Calu3 (cell line): ENCODE measurements at regions of chr2 and their contacts with region 1.

Region 1: DNA sequence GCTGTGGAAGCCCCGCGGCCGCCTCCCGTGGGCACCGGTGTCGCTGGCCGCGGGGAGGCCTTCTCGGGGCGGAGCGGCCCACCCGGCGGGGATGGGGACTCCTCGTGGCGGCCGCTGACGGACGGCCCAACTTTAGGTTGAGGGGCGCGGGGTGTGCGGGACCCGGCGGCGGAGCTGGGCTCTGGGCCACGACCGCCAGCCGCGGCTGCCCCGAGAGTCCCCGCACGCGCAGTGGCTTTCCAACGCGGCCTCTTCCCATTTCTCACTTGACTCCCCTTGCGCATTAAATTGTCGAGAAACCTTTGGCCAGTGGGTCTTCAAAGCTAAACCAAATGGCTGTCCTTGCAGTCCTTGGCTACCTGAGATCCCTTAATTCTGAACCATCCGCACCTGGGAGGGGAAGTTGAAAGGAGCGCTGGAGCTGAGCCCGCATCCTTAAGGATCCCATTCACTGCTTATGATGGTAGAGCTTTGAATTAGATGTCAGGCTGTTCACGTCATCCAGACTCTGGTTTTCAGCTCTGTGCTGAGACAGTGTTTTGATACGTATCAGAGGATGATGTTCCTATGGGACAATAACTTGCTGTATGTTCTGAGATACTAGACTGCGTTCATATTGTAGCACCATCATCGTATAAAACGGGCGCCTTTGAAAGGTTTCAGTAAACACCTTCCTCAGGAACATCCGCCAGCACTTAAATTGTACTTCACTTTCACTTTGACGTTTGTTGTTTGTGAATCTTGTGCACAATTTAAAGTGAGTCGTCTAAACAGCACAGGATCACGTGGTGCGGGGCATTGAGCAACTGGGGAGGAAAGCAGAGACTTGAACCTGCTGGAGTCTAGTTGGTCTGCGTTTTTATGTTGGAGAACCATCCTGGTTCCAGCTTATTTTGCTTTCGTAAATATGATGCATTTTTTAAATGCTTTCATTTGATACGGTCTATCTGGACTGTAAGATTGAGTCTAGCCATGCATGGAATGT is 874 bp downstream of the CLIP4 start:
- DNase-seq: peak; percentile 73
- H3K4me3 Mint-ChIP-seq: peak overlapping the region; percentile 79
- H3K27ac Mint-ChIP-seq: peak overlapping the region; percentile 97
- H3K4me1 Mint-ChIP-seq: peaks cover 65% of the 10 kb centered on the region
- H3K27me3 Mint-ChIP-seq: no peaks in the 10 kb centered on the region
- CTCF ChIP-seq: no peak

Region 2: DNA sequence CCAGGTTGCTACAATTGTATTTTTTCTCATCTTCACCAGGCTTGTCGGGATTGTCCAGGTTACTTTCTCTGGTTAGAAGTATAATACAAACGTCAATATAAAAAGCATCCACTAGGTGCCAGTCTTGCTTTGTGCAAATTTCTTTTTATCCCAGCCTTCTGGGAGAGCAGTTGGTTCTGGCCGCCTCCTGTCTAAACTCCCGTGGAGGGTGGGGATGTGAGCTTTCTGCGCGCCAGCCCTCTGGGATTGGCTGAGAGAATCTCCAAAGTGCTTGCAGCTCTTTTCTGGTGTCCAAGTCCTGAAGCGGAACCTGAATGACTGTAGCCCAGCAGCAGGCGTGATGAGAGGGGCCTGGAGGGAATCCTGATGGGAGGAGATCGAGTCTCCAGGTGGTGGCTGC is 157.4 kb before region 1 on chr2:
- CTCF ChIA-PET with region 1: no interaction called
- intact Hi-C with region 1: loop called (anchors 10 kb)
- DNase-seq: peak; percentile 65
- H3K4me3 Mint-ChIP-seq: no peak overlapping the region
- H3K27ac Mint-ChIP-seq: no peak overlapping the region
- H3K4me1 Mint-ChIP-seq: peaks cover 8% of the 10 kb centered on the region
- H3K27me3 Mint-ChIP-seq: no peaks in the 10 kb centered on the region
- CTCF ChIP-seq: peak; percentile 72

Region 3: DNA sequence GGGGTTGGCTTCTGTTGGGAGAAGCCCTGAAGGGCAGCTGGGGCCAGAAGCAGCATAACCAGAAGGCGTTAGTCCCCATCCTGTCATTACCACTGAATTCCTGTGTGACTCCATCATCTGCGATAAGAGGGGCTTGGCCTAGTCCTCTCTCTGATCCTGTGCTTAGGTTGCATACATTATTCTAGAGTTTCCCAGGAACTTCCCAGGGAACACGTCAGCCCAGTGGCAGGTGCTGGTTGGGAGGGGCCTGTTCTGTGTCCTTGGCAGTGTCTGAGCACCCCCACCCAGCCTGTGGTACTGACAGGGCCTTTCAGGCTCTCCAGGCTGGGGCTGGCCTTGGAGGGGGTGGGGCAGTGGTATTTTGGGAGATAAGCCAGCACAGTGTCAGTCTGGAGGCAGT is 139.5 kb before region 1 on chr2:
- CTCF ChIA-PET with region 1: no interaction called
- intact Hi-C with region 1: loop called (anchors 5 kb)
- DNase-seq: peak; percentile 90
- H3K4me3 Mint-ChIP-seq: peak overlapping the region; percentile 44
- H3K27ac Mint-ChIP-seq: peak overlapping the region; percentile 88
- H3K4me1 Mint-ChIP-seq: peaks cover 36% of the 10 kb centered on the region
- H3K27me3 Mint-ChIP-seq: no peaks in the 10 kb centered on the region
- CTCF ChIP-seq: no peak

Region 4: DNA sequence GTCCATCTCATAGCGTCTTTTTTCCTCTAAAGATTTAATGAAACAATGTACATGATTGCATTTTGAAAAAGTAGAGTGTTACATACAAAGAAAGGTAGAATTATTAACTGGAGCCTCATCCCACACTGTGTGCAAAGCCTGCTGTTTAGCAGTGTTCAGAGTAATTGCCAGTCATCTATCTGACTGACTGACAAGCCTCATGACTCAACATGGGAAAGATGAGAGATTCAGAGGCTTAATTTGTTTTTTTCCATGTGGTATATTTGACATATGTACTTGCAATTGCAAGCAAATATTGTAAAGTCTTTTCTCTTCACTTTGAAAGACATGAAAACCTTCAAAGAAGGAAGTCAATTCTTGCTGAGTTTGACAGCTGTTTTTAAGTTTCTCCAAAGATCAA is 56.5 kb before region 1 on chr2:
- CTCF ChIA-PET with region 1: interaction called, 4 read pairs
- intact Hi-C with region 1: loop called (anchors 5 kb)
- DNase-seq: no peak
- H3K4me3 Mint-ChIP-seq: no peak overlapping the region
- H3K27ac Mint-ChIP-seq: no peak overlapping the region
- H3K4me1 Mint-ChIP-seq: peaks cover 29% of the 10 kb centered on the region
- H3K27me3 Mint-ChIP-seq: no peaks in the 10 kb centered on the region
- CTCF ChIP-seq: no peak

Region 5: DNA sequence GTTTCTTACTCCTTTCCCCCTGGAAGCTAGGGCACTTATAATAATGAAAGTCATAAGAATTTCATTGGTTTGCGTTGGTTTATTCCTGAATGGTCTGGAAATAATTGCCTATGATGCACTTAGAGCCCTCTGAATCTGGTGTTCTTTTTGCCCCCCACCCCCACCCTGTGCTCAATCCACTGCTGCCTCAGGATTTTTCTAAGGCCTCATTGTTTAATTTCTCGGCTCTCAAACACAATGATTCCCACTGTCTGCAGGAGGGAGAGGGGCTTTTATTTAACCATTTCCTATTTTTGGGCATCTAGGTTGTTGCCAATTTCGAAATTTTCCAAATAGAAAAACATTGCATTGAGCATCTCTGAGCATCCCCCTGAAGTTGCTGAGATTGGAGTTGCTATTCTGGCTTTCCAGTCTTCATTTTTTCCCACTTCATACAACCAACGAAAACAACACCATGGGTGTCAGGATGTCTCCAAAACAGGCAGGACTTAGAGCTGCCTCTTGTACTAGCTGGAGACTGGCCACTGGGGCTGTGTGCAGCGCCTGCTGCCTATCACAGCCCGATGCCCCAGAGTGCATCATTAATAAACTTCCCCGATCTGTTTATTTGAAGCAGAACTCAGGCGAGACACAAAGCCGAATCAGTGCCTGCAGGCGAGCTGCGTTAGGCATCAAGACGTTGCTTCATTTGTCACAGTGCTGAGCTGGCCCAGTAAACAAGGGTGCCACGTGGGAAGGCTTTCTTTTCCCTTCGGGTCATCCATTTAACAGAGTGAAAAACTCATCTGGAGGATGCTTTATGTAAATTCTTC is 40.0 kb before region 1 on chr2:
- CTCF ChIA-PET with region 1: interaction called, 10 read pairs
- intact Hi-C with region 1: no loop called
- DNase-seq: no peak
- H3K4me3 Mint-ChIP-seq: no peak overlapping the region
- H3K27ac Mint-ChIP-seq: no peak overlapping the region
- H3K4me1 Mint-ChIP-seq: no peaks in the 10 kb centered on the region
- H3K27me3 Mint-ChIP-seq: no peaks in the 10 kb centered on the region
- CTCF ChIP-seq: no peak

Region 6: DNA sequence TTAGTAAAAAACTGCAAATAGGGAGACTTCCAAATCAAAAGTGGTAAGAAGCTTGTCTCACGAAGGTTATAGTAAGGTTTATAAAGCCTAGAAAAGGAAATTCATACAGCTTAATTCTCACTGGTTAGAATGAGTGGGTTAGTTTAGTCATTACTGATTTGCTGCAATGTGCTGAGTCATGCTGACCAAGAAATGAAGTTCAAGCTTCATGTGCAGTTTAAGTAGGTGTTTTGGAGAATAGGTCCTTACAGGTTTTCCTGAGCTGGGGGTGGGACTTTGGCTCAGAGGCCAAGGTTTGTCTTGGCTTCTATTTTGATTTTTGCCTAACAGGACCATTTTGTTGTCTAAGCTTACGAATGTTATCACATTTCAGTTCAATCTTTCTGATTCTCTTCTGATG is 14.2 kb after region 1 on chr2:
- CTCF ChIA-PET with region 1: interaction called, 15 read pairs
- intact Hi-C with region 1: no loop called
- DNase-seq: peak; percentile 46
- H3K4me3 Mint-ChIP-seq: peak overlapping the region; percentile 53
- H3K27ac Mint-ChIP-seq: peak overlapping the region; percentile 89
- H3K4me1 Mint-ChIP-seq: peaks cover 41% of the 10 kb centered on the region
- H3K27me3 Mint-ChIP-seq: no peaks in the 10 kb centered on the region
- CTCF ChIP-seq: no peak

Region 7: DNA sequence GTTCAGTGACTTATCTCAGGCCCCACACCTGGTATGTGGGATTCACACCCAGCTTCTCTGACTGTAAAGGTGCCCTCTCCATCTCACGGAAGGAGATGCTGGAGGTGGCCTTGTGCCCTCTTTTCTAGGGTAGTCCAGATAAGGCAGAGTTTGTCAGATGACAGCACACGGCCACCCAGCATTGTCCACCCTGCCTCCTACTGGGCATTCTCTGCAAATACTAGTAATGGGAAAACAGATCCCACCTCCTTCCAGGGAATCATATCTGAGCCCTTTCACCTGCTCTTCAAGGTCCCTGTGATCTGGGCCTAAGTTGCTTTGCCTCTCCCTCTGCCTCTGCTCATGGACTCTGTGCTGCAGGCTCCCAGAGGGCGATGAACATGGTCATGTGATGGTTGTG is 213.8 kb after region 1 on chr2:
- CTCF ChIA-PET with region 1: no interaction called
- intact Hi-C with region 1: no loop called
- DNase-seq: no peak
- H3K4me3 Mint-ChIP-seq: no peak overlapping the region
- H3K27ac Mint-ChIP-seq: no peak overlapping the region
- H3K4me1 Mint-ChIP-seq: no peaks in the 10 kb centered on the region
- H3K27me3 Mint-ChIP-seq: peaks cover 54% of the 10 kb centered on the region
- CTCF ChIP-seq: no peak